ENCODE measurements at regions of chr3 and their contacts with region 1.

Region 1: GRCh38 chr3:70090322-70090913 is 90.9 kb downstream of the SAMMSON start:
- DNase-seq: peak; percentile 52
- H3K4me3 ChIP-seq: no peak overlapping the region
- H3K27ac ChIP-seq: no peak overlapping the region
- H3K4me1 ChIP-seq: no peaks in the 10 kb centered on the region
- H3K27me3 ChIP-seq: no peaks in the 10 kb centered on the region
- CTCF ChIP-seq: peak; percentile 42 to 52
- POLR2A ChIP-seq: no peak

Region 2: DNA sequence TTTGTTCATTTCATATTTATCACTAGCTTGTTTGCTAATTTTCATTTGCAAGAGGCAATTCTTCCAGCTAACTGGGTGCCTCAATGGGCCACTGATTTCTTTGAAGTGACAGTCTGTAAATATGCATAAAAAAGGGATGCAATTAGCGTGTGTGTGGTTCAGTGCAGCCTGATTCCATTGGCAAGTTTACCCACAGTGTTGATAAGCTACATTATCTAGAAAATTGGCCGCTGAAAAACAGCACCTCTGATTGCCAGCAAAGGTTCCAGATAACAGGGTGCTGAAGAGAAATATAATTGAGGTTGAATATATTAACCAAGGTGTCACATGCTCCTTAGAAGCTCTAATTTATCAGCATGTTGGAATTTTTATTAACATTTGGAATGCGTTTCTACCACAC is 14.0 kb before region 1 on chr3:
- CTCF ChIA-PET with region 1: interaction called, 13 read pairs
- POLR2A ChIA-PET with region 1: no interaction called
- dilution Hi-C with region 1: no loop called
- intact Hi-C with region 1: no loop called
- DNase-seq: no peak
- H3K4me3 ChIP-seq: no peak overlapping the region
- H3K27ac ChIP-seq: no peak overlapping the region
- H3K4me1 ChIP-seq: peaks cover 2% of the 10 kb centered on the region
- H3K27me3 ChIP-seq: peaks cover 0 to 2% of the 10 kb centered on the region in 2 experiments
- CTCF ChIP-seq: no peak
- POLR2A ChIP-seq: no peak

Region 3: GRCh38 chr3:70108072-70108471 is 17.7 kb after region 1 on chr3:
- CTCF ChIA-PET with region 1: interaction called, 15 read pairs
- POLR2A ChIA-PET with region 1: no interaction called
- dilution Hi-C with region 1: no loop called
- intact Hi-C with region 1: no loop called
- DNase-seq: no peak
- H3K4me3 ChIP-seq: no peak overlapping the region
- H3K27ac ChIP-seq: no peak overlapping the region
- H3K4me1 ChIP-seq: peaks cover 11% of the 10 kb centered on the region
- H3K27me3 ChIP-seq: no peaks in the 10 kb centered on the region
- CTCF ChIP-seq: peak; percentile 45 to 49
- POLR2A ChIP-seq: no peak

Measured in endothelial cell of umbilical vein (primary cell).